SK-N-SH (cell line): ENCODE measurements at regions of chr12 and their contacts with region 1.

Region 1: GRCh38 chr12:55728939-55729823 is at the start of gene CD63:
- DNase-seq: peak; percentile 93
- H3K4me3 ChIP-seq: peak within 1 kb of the TSS; percentile 74 to 97
- H3K27ac ChIP-seq: peak within 1 kb of the TSS; percentile 97 to 100
- H3K4me1 ChIP-seq: peaks cover 0 to 26% of the 10 kb centered on the region in 2 experiments; a peak in 1 of 4 replicates
- H3K27me3 ChIP-seq: no peaks in the 10 kb centered on the region
- CTCF ChIP-seq: no peak
- EP300 ChIP-seq: peak in 1 of 2 experiments; percentile 6; a peak in 1 of 4 replicates
- RAD21 ChIP-seq: no peak
- polyA plus RNA-seq, gene CD63: 1,022 and 1,465 TPM in 2 replicates

Region 2: GRCh38 chr12:55715833-55716581 is 13.2 kb before region 1 on chr12 and contains the start of gene BLOC1S1:
- CTCF ChIA-PET with region 1: interaction called, 202 read pairs
- POLR2A ChIA-PET with region 1: interaction called, 8 read pairs
- DNase-seq: peak; percentile 96
- H3K4me3 ChIP-seq: peak within 1 kb of the TSS; percentile 67 to 92
- H3K27ac ChIP-seq: peak within 1 kb of the TSS; percentile 87 to 92
- H3K4me1 ChIP-seq: peaks cover 29% of the 10 kb centered on the region in 2 experiments
- H3K27me3 ChIP-seq: no peaks in the 10 kb centered on the region
- CTCF ChIP-seq: 0 out of 2 replicates have a peak, but pooled peaks have one; percentile 9
- EP300 ChIP-seq: peak in 1 of 2 experiments; percentile 56; a peak in 1 of 4 replicates
- RAD21 ChIP-seq: no peak
- polyA plus RNA-seq, gene BLOC1S1: 277 and 331 TPM in 2 replicates

Region 3: DNA sequence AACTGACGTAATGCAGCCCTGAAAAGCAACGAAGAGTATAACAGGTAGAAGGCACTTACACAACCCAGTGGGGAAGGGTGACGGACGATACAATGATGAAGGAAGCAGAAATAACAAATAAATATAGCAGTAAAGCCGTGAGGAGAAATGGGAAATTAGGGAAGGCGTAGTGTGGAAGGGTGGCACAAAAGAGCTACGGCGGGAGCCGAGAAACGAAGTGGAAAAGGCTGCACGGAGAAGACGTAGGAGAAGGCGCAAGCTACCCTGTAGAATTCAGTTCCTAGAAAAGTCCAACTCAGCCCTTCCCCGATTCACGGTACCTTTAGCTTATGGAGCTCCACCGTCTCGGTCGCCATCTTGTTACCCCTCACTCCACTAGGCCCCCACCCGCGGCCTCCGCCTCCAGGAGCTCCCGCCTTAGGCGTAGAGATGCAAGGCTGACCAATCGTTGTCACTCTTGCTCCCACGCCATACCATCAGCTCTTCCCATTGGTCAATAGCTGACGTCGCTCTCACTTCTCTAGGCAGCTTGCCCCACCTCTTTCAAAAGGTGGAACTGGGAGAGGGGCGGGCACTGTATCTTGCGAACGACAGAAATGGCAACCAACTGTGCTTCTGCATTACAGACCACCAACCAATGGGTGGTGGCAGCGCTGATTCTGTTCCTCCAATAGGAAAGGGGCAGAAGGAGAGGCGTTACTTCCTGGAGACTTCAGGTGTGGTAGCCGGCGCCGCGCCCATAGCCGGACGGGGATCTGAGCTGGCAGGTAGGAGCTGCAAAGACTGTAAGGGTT is 88.4 kb after region 1 on chr12 and contains the starts of genes ORMDL2 and SARNP:
- CTCF ChIA-PET with region 1: interaction called, 4 read pairs
- POLR2A ChIA-PET with region 1: interaction called, 14 read pairs
- DNase-seq: peak; percentile 91
- H3K4me3 ChIP-seq: peak within 1 kb of the TSS; percentile 87 to 96
- H3K27ac ChIP-seq: peak within 1 kb of the TSS; percentile 76 to 85
- H3K4me1 ChIP-seq: peaks cover 8 to 11% of the 10 kb centered on the region in 2 experiments
- H3K27me3 ChIP-seq: no peaks in the 10 kb centered on the region
- CTCF ChIP-seq: no peak
- EP300 ChIP-seq: no peak
- RAD21 ChIP-seq: no peak
- polyA plus RNA-seq, gene ORMDL2: 35.2 and 37.3 TPM in 2 replicates
- polyA plus RNA-seq, gene SARNP: 65.8 and 66.9 TPM in 2 replicates